Thyroid gland (tissue), 4 donors: ENCODE measurements at regions of chr14 and their contacts with region 1.

Region 1: GRCh38 chr14:94129111-94129757 is at the start of gene IFI27L2:
- DNase-seq: peak; percentile 67 to 69
- H3K4me3 ChIP-seq: peak within 1 kb of the TSS in 2 of 3 donors; percentile 21 to 33
- H3K27ac ChIP-seq: peak within 1 kb of the TSS; percentile 35 to 68 (median 59)
- H3K4me1 ChIP-seq: peaks cover 9 to 12% of the 10 kb centered on the region in 2 donors
- H3K27me3 ChIP-seq: no peaks in the 10 kb centered on the region
- CTCF ChIP-seq: peak in 3 of 6 experiments; percentile 24 to 42 (median 41)
- POLR2A ChIP-seq: peak in 1 of 2 donors; percentile 35
- total RNA-seq, gene IFI27L2: 7.8 to 97.8 (median 23.1) TPM

Region 2: DNA sequence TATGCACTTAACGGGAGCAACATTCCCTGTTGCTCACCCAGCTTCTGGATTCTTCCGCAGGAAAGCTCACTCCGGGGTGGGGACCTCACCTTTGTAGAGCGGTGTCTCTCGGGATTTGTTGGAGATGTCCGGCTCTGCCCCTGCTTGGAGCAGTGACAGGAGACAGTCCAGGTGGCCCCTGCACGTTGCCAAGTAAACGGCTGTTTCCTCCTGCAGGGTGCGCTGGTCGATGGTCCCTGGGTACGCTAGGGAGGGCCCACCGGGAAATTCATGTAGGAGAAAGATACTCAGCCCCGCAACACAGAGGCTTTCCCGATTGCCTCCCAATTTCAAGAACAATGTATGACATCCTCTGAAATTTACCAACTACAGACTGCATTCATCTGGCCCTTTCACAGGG is 176.0 kb before region 1 on chr14:
- intact Hi-C with region 1: no loop called
- DNase-seq: no peak
- H3K4me3 ChIP-seq: no peak overlapping the region
- H3K27ac ChIP-seq: no peak overlapping the region
- H3K4me1 ChIP-seq: no peaks in the 10 kb centered on the region
- H3K27me3 ChIP-seq: no peaks in the 10 kb centered on the region
- CTCF ChIP-seq: no peak
- POLR2A ChIP-seq: no peak

Region 3: GRCh38 chr14:93970549-93970946 is 158.7 kb before region 1 on chr14:
- intact Hi-C with region 1: no loop called
- DNase-seq: peak in 1 of 2 donors; percentile 14
- H3K4me3 ChIP-seq: no peak overlapping the region
- H3K27ac ChIP-seq: no peak overlapping the region
- H3K4me1 ChIP-seq: peaks cover 0 to 4% of the 10 kb centered on the region in 2 donors
- H3K27me3 ChIP-seq: no peaks in the 10 kb centered on the region
- CTCF ChIP-seq: no peak
- POLR2A ChIP-seq: no peak

Region 4: GRCh38 chr14:94175011-94175745 is 45.9 kb after region 1 on chr14:
- intact Hi-C with region 1: loop called (anchors 5 kb)
- DNase-seq: peak in 1 of 2 donors; percentile 17
- H3K4me3 ChIP-seq: peak overlapping the region in 2 of 3 donors; percentile 45 to 53
- H3K27ac ChIP-seq: no peak overlapping the region
- H3K4me1 ChIP-seq: peaks cover 12 to 13% of the 10 kb centered on the region in 2 donors
- H3K27me3 ChIP-seq: no peaks in the 10 kb centered on the region
- CTCF ChIP-seq: no peak
- POLR2A ChIP-seq: no peak